Posterior vena cava (tissue), 2 donors: ENCODE measurements at regions of chr17 and their contacts with region 1.

Region 1: GRCh38 chr17:78313735-78314648 is 45.9 kb downstream of the SOCS3 start:
- DNase-seq: peak; percentile 92

Region 2: GRCh38 chr17:78013683-78014467 is 300.1 kb before region 1 on chr17:
- intact Hi-C with region 1: no loop called
- DNase-seq: no peak

Region 3: GRCh38 chr17:78289802-78290363 is 24.1 kb before region 1 on chr17:
- intact Hi-C with region 1: loop called in 1 of 2 experiments (anchors 1 kb)
- DNase-seq: peak; percentile 93